ENCODE measurements at regions of chr2 and their contacts with region 1.

Region 1: DNA sequence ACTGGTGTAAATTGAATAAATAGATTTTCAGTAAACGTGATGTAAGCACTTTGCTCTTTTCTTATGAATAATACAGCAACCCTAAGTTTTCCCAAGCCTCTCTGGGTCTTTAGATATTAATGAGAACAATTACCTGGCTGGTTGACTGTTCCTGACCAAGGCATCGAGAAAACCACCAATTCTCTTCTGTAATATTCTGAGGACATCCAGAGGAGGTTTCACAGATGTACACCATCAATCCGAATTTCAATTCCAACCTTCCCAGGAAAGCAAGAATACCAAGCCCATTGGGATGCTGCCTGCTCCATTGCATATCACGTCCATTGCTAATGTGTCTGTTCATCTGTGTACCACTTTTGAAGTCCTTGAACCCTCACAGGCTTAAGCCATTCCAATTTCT is 571.8 kb downstream of the NUP35 start:
- DNase-seq: no peak
- ATAC-seq: peak; percentile 26

Region 2: GRCh38 chr2:183248866-183249567 is 447.0 kb before region 1 on chr2:
- intact Hi-C with region 1: loop called (anchors 5 kb)
- DNase-seq: no peak
- ATAC-seq: no peak

Region 3: GRCh38 chr2:183416753-183417152 is 279.3 kb before region 1 on chr2:
- intact Hi-C with region 1: no loop called
- DNase-seq: no peak
- ATAC-seq: no peak

Region 4: DNA sequence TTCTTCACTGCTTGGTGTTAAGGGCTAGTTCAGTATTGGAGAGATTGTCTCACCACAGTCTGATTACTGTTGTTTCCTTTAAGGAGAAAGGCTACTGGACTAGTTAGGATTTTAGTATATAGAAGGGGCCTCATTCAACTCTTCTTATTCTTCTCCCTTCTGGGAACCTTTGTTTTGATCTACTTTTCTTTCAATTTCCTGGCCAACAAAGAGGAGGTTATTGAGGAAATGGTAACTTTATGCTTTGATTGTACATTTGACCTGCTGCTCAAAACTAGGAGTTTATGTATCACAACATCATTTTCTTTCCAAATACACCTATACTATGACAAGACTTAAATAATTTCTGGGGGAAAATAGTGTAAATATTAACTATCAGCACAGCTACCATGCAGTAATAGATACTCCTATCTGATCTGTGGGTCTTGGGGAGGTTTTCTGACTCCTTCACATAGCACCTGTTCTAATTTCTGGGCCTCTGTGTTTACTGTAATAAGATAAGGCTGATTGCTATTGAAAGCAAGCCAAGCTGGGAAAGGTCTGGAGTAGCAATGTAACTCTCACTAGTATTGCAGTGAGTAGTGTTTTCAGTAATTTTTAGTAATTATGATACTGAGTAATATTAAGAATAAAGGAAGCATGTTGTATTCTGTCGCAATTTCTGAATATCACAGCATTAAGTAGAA is 176.5 kb before region 1 on chr2:
- intact Hi-C with region 1: no loop called
- DNase-seq: no peak
- ATAC-seq: no peak

Region 5: GRCh38 chr2:183656121-183656520 is 39.9 kb before region 1 on chr2:
- intact Hi-C with region 1: no loop called
- DNase-seq: no peak
- ATAC-seq: no peak